Activated CD4-positive, alpha-beta T cell treated with anti-CD3 and anti-CD28 coated beads, Interleukin-2, amount 10 ng/mL, durations not matched to agents 24 days and 14 days (primary cell): ENCODE measurements at regions of chr10 and their contacts with region 1.

Region 1: DNA sequence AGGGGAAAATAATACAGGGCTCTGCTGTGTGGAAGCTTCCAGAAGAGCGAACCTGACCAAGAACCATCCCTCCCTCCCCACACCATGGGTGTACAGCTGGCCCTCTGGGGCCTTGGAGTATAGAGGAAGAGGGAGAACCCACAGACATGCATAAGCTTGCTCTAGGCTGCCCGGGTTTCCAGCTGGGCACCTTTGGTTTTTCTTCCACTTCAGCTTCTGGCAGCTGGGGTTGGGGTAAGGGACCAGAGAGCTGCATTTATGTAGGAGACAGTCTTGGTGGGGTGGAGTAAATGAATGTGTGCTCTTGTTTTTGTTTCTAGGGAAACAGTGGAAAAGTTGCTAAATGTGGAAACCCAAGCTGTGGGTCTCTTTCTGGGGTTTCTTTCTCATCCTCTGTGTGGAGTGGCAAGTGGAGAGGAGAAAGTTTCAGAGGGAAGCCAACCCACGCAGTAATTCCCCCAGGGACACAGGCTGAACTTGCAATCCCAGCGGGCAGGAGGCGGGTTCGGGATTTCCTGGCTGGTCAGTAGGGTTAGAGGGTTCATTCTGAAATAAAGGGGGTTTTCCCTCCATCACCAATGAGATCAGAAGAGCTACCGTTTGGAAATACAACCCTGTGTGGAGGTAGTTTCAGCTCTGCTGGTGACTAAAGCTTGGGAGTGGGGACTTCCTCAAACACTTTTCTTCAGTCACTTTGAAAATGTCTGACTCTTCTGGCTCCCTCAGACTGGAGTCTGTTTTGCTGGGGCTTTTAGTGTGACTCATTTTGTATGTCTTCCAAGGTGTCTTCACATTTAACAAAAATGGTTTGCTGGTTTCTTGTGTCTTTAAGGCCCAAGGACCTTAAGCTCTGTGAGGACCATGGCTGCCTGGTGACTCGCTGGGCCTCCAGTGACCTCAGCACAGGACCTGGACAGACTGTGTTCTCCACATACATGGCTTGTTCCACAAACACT is 22.2 kb upstream of the SRGN start:
- DNase-seq: peak; percentile 79
- H3K4me3 Mint-ChIP-seq: peak overlapping the region; percentile 82
- H3K27ac Mint-ChIP-seq: peak overlapping the region; percentile 99
- H3K4me1 Mint-ChIP-seq: peaks cover 40% of the 10 kb centered on the region
- H3K27me3 Mint-ChIP-seq: no peaks in the 10 kb centered on the region

Region 2: DNA sequence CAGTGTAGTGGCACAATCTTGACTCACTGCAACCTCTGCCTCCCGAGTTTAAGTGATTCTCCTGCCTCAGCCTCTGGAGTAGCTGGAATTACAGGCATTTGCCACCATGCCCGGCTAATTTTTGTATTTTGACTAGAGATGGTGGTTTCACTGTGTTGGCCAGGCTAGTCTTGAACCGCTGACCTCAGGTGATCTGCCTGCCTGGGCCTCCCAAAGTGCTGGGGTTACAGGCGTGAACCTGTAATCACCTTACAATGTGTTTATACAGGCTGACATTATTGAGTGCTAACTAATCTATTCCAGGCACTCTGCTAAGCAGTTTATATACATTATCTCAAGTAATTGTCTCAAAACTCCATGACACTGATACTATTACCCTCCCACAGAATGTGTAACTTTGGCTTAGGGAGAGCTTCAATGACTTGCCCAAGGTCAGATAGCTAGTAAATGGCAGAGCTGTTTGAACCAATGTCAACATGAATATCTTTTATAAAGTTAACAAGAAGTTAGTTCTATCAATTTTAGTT is 40.3 kb before region 1 on chr10:
- intact Hi-C with region 1: loop called (anchors 5 kb)
- DNase-seq: no peak
- H3K4me3 Mint-ChIP-seq: no peak overlapping the region
- H3K27ac Mint-ChIP-seq: no peak overlapping the region
- H3K4me1 Mint-ChIP-seq: peaks cover 10% of the 10 kb centered on the region
- H3K27me3 Mint-ChIP-seq: no peaks in the 10 kb centered on the region

Region 3: DNA sequence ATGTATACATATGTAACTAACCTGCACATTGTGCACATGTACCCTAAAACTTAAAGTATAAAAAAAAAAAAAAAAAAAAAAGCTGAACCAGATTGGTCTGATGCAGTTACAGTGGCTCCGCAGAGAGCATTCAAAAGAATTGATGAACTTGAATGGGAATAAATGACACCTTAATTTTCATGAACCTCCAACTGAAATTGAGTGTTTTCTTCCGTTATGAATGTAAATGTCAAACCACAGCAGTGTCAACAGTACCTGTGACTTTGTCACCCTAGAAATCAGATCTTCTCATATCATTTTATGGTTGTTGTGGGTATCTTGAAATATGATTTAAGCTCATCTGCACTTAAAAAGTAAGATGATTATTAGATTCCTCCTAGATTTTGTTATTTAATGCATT is 10.4 kb before region 1 on chr10:
- intact Hi-C with region 1: loop called (anchors 1 kb)
- DNase-seq: no peak
- H3K4me3 Mint-ChIP-seq: no peak overlapping the region
- H3K27ac Mint-ChIP-seq: peak overlapping the region; percentile 67
- H3K4me1 Mint-ChIP-seq: peaks cover 57% of the 10 kb centered on the region
- H3K27me3 Mint-ChIP-seq: no peaks in the 10 kb centered on the region